AG04449 (cell line): ENCODE measurements at regions of chr1 and their contacts with region 1.

Region 1: GRCh38 chr1:170929835-170930554 is 5.3 kb upstream of the MROH9 start:
- DNase-seq: no peak
- H3K4me3 ChIP-seq: no peak overlapping the region
- CTCF ChIP-seq: peak; percentile 54

Region 2: GRCh38 chr1:170917373-170917772 is 12.6 kb before region 1 on chr1:
- CTCF ChIA-PET with region 1: interaction called, 13 read pairs
- POLR2A ChIA-PET with region 1: no interaction called
- DNase-seq: no peak
- H3K4me3 ChIP-seq: no peak overlapping the region
- CTCF ChIP-seq: no peak

Region 3: DNA sequence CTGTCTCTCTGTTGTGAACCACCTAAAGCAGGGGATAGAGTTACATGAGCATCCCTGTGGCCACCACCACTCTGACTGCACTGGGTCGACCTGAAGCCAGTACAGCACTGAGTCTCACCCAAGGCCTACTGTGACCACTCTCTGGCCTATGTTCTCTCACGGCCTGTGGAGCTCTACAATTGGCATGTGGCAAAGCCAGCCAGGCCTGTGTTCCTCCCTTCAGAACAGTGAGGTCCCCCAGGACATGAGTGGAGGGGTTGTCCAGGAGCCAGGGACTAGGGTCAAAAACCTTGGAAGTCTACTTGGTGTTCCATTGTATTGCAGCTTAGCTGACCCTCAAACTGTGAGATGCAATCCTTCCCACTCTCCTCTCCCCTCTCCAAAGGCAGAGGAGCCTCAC is 118.0 kb after region 1 on chr1:
- CTCF ChIA-PET with region 1: no interaction called
- POLR2A ChIA-PET with region 1: no interaction called
- DNase-seq: no peak
- H3K4me3 ChIP-seq: no peak overlapping the region
- CTCF ChIP-seq: no peak